ENCODE measurements at regions of chr7 and their contacts with region 1.

Region 1: DNA sequence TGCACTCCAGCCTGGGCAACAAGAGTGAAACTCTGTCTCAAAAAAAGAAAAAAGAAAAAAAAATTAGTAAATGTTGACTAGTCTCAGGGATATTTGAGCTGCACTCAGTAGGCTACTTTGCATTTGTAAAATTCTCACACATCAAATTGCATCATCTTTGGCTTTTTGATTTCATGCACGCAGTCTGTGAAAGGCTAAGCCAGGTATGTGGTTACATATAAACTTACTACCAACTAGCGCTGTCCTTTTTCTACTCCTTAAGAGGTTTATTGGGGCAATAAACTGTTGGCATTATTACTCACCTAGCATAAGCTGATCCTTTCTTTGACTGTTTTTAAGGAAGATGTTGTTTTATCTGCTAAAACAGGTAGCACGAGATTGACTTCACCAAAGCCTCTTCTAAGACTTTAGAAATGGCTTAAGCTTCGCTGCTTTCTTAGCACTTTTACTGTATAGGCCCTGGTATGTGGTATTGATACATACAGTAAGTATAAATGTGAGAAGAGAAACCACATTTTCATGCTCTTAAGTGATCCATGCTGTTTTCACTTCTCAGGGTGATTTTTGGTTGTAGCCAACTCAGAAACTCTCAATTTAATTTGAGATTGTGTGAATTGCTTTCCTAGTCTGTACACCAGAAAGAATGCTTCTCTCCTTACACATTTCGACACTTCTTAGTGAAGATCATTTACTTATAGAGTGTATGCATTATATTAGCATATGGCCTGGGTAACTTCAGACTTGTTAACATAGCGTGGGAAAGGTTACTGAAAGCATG is 323.9 kb downstream of the AUTS2 start:
- DNase-seq: peak; percentile 76
- ATAC-seq: peak; percentile 92
- H3K4me3 ChIP-seq: no peak overlapping the region
- H3K27ac ChIP-seq: peak overlapping the region; percentile 91
- H3K4me1 ChIP-seq: peaks cover 16% of the 10 kb centered on the region
- H3K27me3 ChIP-seq: no peaks in the 10 kb centered on the region
- CTCF ChIP-seq: no peak
- EP300 ChIP-seq: no peak
- POLR2A ChIP-seq: no peak
- RAD21 ChIP-seq: peak; percentile 18

Region 2: DNA sequence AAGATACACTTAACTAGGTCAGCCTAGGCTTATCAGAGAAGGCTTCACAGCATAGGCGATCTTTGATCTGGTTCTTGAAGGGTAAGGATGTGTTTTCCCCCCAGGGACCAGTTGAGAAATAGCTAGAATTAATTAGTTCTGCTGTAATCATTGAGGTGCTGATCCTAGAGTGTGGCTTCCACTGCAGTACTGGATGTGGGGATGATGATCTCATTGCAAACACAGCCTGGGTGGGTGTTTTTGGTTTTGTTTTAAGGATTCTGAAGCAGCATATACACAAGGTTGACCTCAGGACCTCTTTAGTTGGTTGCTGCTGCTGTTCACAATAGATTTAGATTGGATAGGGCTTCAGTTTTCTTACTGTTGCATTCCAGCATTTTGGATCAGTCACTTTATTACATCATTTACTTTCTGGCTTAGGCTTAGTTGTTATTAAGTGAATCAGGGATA is 164.2 kb before region 1 on chr7:
- CTCF ChIA-PET with region 1: no interaction called
- POLR2A ChIA-PET with region 1: no interaction called
- RAD21 ChIA-PET with region 1: no interaction called
- SMC1A ChIA-PET with region 1: no interaction called
- in situ Hi-C with region 1: no loop called
- intact Hi-C with region 1: loop called (anchors 5 kb)
- DNase-seq: no peak
- ATAC-seq: peak; percentile 76
- H3K4me3 ChIP-seq: no peak overlapping the region
- H3K27ac ChIP-seq: no peak overlapping the region
- H3K4me1 ChIP-seq: peaks cover under 1% of the 10 kb centered on the region
- H3K27me3 ChIP-seq: no peaks in the 10 kb centered on the region
- CTCF ChIP-seq: no peak
- EP300 ChIP-seq: 0 out of 4 replicates have a peak, but pooled peaks of 1 of the 2 experiments have one; percentile 25
- POLR2A ChIP-seq: no peak
- RAD21 ChIP-seq: no peak

Region 3: GRCh38 chr7:69837387-69838068 is 84.7 kb before region 1 on chr7:
- CTCF ChIA-PET with region 1: no interaction called
- POLR2A ChIA-PET with region 1: no interaction called
- RAD21 ChIA-PET with region 1: no interaction called
- SMC1A ChIA-PET with region 1: no interaction called
- in situ Hi-C with region 1: no loop called
- intact Hi-C with region 1: loop called (anchors 1 kb)
- DNase-seq: no peak
- ATAC-seq: no peak
- H3K4me3 ChIP-seq: no peak overlapping the region
- H3K27ac ChIP-seq: no peak overlapping the region
- H3K4me1 ChIP-seq: peaks cover 29% of the 10 kb centered on the region
- H3K27me3 ChIP-seq: no peaks in the 10 kb centered on the region
- CTCF ChIP-seq: no peak
- EP300 ChIP-seq: no peak
- POLR2A ChIP-seq: no peak
- RAD21 ChIP-seq: no peak

Region 4: GRCh38 chr7:69906283-69906995 is 15.8 kb before region 1 on chr7:
- CTCF ChIA-PET with region 1: interaction called, 3 read pairs
- POLR2A ChIA-PET with region 1: interaction called, 3 read pairs
- RAD21 ChIA-PET with region 1: interaction called, 39 read pairs
- SMC1A ChIA-PET with region 1: interaction called, 72 read pairs
- in situ Hi-C with region 1: no loop called
- intact Hi-C with region 1: loop called (anchors 2 kb)
- DNase-seq: peak; percentile 97
- ATAC-seq: peak; percentile 90
- H3K4me3 ChIP-seq: no peak overlapping the region
- H3K27ac ChIP-seq: peak overlapping the region; percentile 88
- H3K4me1 ChIP-seq: peaks cover 22% of the 10 kb centered on the region
- H3K27me3 ChIP-seq: no peaks in the 10 kb centered on the region
- CTCF ChIP-seq: no peak
- EP300 ChIP-seq: peak; percentile 94 to 96
- POLR2A ChIP-seq: no peak
- RAD21 ChIP-seq: no peak

Region 5: DNA sequence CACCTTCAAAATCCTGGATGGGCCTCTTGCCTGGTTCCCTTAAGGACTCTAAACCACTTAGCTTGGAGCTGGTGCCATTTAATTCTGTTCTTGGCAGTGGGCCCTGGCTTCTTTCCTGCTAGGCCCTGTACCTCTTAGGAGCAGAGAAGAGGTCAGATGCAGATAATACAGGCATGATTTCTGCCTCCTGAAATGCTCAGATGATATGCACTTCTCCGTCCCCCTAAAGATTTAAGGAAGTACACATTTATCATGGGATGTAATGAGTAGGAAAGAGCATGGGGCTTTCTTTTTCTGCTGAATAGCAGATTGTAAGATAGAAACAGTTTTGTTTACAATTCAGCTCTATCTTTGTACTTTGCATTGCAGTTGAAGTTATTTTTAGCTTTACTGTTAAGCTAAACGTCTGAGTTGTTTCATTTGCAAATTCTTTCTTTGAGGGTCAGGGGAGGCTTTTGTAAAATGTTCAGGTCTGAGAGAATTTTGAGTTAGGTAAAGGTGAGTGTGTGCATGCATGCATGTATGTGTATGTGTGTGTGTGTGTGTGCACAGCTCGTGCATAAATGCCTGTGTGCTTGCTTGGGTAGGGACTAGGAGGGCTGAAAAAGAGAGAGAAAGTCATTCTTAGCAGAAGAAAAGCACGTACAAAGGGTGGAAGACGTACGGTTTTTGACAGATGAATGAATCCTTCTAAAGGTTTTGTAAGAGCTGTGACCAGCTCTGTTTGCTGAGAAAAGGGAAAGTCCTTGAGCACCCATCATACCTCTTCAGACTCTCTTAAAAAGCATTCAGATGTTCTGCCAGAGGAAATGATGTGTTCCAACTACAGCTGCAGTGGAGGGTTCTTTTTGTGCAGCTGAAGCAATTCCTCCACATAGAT is 40.2 kb after region 1 on chr7:
- CTCF ChIA-PET with region 1: interaction called, 3 read pairs
- POLR2A ChIA-PET with region 1: no interaction called
- RAD21 ChIA-PET with region 1: no interaction called
- SMC1A ChIA-PET with region 1: interaction called, 10 read pairs
- in situ Hi-C with region 1: no loop called
- intact Hi-C with region 1: no loop called
- DNase-seq: peak; percentile 39
- ATAC-seq: peak; percentile 78
- H3K4me3 ChIP-seq: peak overlapping the region; percentile 25; the same call in 1 of the 2 replicates
- H3K27ac ChIP-seq: peak overlapping the region; percentile 36
- H3K4me1 ChIP-seq: peaks cover 10% of the 10 kb centered on the region
- H3K27me3 ChIP-seq: no peaks in the 10 kb centered on the region
- CTCF ChIP-seq: no peak
- EP300 ChIP-seq: no peak
- POLR2A ChIP-seq: no peak
- RAD21 ChIP-seq: no peak

Region 6: GRCh38 chr7:70271617-70272081 is 349.4 kb after region 1 on chr7:
- CTCF ChIA-PET with region 1: no interaction called
- POLR2A ChIA-PET with region 1: no interaction called
- RAD21 ChIA-PET with region 1: no interaction called
- SMC1A ChIA-PET with region 1: no interaction called
- in situ Hi-C with region 1: no loop called
- intact Hi-C with region 1: no loop called
- DNase-seq: no peak
- ATAC-seq: no peak
- H3K4me3 ChIP-seq: no peak overlapping the region
- H3K27ac ChIP-seq: no peak overlapping the region
- H3K4me1 ChIP-seq: no peaks in the 10 kb centered on the region
- H3K27me3 ChIP-seq: no peaks in the 10 kb centered on the region
- CTCF ChIP-seq: no peak
- EP300 ChIP-seq: no peak
- POLR2A ChIP-seq: no peak
- RAD21 ChIP-seq: no peak

Measured in GM12878 (cell line).